AG04449 (cell line): ENCODE measurements at regions of chr10 and their contacts with region 1.

Region 1: GRCh38 chr10:103659674-103660363 is 166.3 kb downstream of the NEURL1 start:
- DNase-seq: peak; percentile 53
- H3K4me3 ChIP-seq: peak overlapping the region; percentile 83
- CTCF ChIP-seq: peak; percentile 25

Region 2: DNA sequence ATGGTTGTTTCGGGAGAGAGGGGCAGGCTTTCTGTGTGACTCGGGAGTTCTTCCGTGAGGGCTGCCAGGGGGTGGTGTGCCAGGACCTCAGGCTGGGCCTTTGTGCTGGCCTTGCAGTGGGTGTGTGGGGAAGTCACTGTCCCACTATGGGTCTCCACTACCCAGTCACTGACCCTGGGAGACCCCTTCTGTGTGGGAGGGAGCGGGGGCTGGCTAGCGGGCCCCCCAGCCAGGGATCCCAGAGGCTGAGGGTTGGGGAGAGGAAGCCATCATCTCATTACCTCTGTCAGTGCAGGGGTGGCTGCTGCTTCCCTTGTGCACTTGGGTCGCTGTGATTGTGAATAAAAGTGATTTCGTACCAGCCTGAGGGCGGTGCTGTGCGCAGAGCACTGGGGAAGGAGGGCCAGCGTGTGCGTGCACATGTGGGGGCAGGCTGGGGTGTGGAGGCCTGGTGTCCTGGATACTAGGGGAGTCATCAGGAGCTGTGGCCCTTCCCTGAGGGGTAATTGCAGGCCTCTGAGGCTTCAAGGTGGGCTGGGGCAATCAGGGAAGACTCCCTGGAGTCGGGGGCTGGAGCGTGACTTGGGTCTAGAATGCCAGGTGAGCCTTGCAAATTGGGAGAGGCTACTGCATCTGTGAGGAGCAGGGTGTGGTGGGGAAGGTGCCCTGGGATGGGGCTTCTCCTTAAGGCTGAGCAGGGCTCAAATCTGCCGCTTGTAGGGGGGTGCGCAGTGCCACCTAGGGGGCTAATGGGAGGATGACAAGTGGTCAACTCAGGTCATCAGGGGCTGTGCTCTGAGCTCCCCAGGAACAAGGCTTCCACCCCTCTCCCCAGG is 67.4 kb before region 1 on chr10:
- CTCF ChIA-PET with region 1: interaction called, 10 read pairs
- POLR2A ChIA-PET with region 1: interaction called, 3 read pairs
- DNase-seq: no peak
- H3K4me3 ChIP-seq: no peak overlapping the region
- CTCF ChIP-seq: peak; percentile 80

Region 3: GRCh38 chr10:103645141-103646054 is 14.4 kb before region 1 on chr10:
- CTCF ChIA-PET with region 1: interaction called, 23 read pairs
- POLR2A ChIA-PET with region 1: interaction called, 29 read pairs
- DNase-seq: peak; percentile 91
- H3K4me3 ChIP-seq: no peak overlapping the region
- CTCF ChIP-seq: no peak

Region 4: GRCh38 chr10:103678178-103678526 is 18.3 kb after region 1 on chr10:
- CTCF ChIA-PET with region 1: interaction called, 84 read pairs
- POLR2A ChIA-PET with region 1: interaction called, 11 read pairs
- DNase-seq: peak; percentile 97
- H3K4me3 ChIP-seq: peak overlapping the region; percentile 72
- CTCF ChIP-seq: no peak